ENCODE measurements at regions of chr11 and their contacts with region 1.

Region 1: GRCh38 chr11:67105964-67106363 is 13.1 kb upstream of the KDM2A start:
- DNase-seq: no peak
- ATAC-seq: no peak
- H3K4me3 Mint-ChIP-seq: no peak overlapping the region
- H3K27ac Mint-ChIP-seq: no peak overlapping the region
- H3K4me1 Mint-ChIP-seq: peaks cover 19% of the 10 kb centered on the region
- H3K27me3 Mint-ChIP-seq: no peaks in the 10 kb centered on the region
- CTCF ChIP-seq: no peak

Region 2: GRCh38 chr11:66539170-66539869 is 566.6 kb before region 1 on chr11:
- CTCF ChIA-PET with region 1: no interaction called
- POLR2A ChIA-PET with region 1: no interaction called
- intact Hi-C with region 1: no loop called
- DNase-seq: no peak
- ATAC-seq: no peak
- H3K4me3 Mint-ChIP-seq: no peak overlapping the region
- H3K27ac Mint-ChIP-seq: no peak overlapping the region
- H3K4me1 Mint-ChIP-seq: peaks cover 12% of the 10 kb centered on the region
- H3K27me3 Mint-ChIP-seq: no peaks in the 10 kb centered on the region
- CTCF ChIP-seq: no peak

Region 3: DNA sequence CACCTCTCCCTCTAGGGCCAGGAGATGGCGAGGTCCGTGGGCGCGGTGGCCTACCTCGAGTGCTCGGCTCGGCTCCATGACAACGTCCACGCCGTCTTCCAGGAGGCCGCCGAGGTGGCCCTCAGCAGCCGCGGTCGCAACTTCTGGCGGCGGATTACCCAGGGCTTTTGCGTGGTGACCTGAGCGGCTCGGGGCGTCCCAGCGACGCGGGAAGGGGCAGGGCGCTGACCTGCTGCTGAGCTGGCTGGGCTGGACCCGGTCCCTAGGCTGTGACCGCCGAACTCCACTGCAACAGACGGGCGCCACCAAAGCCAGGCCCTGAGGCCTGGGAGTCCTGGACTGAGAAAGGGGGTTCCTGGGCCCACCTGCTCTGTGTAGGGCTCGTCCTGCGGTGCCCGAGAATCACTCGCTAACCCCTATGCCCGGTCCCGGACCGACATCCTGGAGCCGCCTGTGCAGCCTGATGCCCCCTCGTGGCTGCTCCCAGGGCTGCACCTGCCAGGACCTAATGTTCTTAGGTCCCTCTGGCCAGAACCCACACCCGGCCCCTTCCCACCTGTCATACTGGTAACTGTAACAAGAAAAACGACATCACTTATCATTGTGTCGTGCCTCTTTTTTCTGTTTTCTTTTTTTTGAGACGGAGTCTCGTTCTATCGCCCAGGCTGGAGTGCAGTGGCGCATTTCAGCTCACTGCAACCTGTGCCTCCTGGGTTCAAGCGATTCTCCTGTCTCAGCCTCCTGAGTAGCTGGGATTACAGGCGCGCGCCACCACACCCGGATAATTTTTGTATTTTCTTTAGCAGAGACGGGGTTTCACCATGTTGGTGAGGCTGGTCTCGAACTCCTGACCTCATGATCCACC is 34.3 kb before region 1 on chr11:
- CTCF ChIA-PET with region 1: no interaction called
- POLR2A ChIA-PET with region 1: no interaction called
- intact Hi-C with region 1: no loop called
- DNase-seq: peak; percentile 91
- ATAC-seq: peak; percentile 99
- H3K4me3 Mint-ChIP-seq: peak overlapping the region; percentile 31
- H3K27ac Mint-ChIP-seq: no peak overlapping the region
- H3K4me1 Mint-ChIP-seq: no peaks in the 10 kb centered on the region
- H3K27me3 Mint-ChIP-seq: no peaks in the 10 kb centered on the region
- CTCF ChIP-seq: peak; percentile 94

Region 4: GRCh38 chr11:67118801-67119584 is 13.0 kb after region 1 on chr11 and contains the start of gene KDM2A:
- CTCF ChIA-PET with region 1: interaction called, 17 read pairs
- POLR2A ChIA-PET with region 1: interaction called, 16 read pairs
- intact Hi-C with region 1: no loop called
- DNase-seq: peak; percentile 99
- ATAC-seq: peak; percentile 83
- H3K4me3 Mint-ChIP-seq: peak within 1 kb of the TSS; percentile 100
- H3K27ac Mint-ChIP-seq: peak within 1 kb of the TSS; percentile 96
- H3K4me1 Mint-ChIP-seq: peaks cover 31% of the 10 kb centered on the region
- H3K27me3 Mint-ChIP-seq: no peaks in the 10 kb centered on the region
- CTCF ChIP-seq: no peak
- total RNA-seq, gene KDM2A: 79.6 to 88.1 TPM